Endothelial cell of umbilical vein (primary cell): ENCODE measurements at regions of chr18 and their contacts with region 1.

Region 1: GRCh38 chr18:76803814-76804213 is 18.5 kb upstream of the ZNF236 start:
- DNase-seq: peak; percentile 63
- H3K4me3 ChIP-seq: peak overlapping the region in 1 of 3 experiments; percentile 40
- H3K27ac ChIP-seq: no peak overlapping the region
- H3K4me1 ChIP-seq: peaks cover 9% of the 10 kb centered on the region
- H3K27me3 ChIP-seq: no peaks in the 10 kb centered on the region
- CTCF ChIP-seq: peak; percentile 82 to 85
- POLR2A ChIP-seq: no peak

Region 2: GRCh38 chr18:76791106-76791505 is 12.7 kb before region 1 on chr18:
- CTCF ChIA-PET with region 1: interaction called, 40 read pairs
- POLR2A ChIA-PET with region 1: no interaction called
- dilution Hi-C with region 1: no loop called
- intact Hi-C with region 1: no loop called
- DNase-seq: no peak
- H3K4me3 ChIP-seq: no peak overlapping the region
- H3K27ac ChIP-seq: no peak overlapping the region
- H3K4me1 ChIP-seq: no peaks in the 10 kb centered on the region
- H3K27me3 ChIP-seq: no peaks in the 10 kb centered on the region
- CTCF ChIP-seq: no peak
- POLR2A ChIP-seq: no peak

Region 3: GRCh38 chr18:76847916-76848315 is 44.1 kb after region 1 on chr18:
- CTCF ChIA-PET with region 1: interaction called, 15 read pairs
- POLR2A ChIA-PET with region 1: no interaction called
- dilution Hi-C with region 1: no loop called
- intact Hi-C with region 1: no loop called
- DNase-seq: peak; percentile 17
- H3K4me3 ChIP-seq: no peak overlapping the region
- H3K27ac ChIP-seq: no peak overlapping the region
- H3K4me1 ChIP-seq: no peaks in the 10 kb centered on the region
- H3K27me3 ChIP-seq: no peaks in the 10 kb centered on the region
- CTCF ChIP-seq: no peak
- POLR2A ChIP-seq: no peak

Region 4: GRCh38 chr18:76875390-76876325 is 71.8 kb after region 1 on chr18:
- CTCF ChIA-PET with region 1: interaction called, 19 read pairs
- POLR2A ChIA-PET with region 1: no interaction called
- dilution Hi-C with region 1: no loop called
- intact Hi-C with region 1: loop called (anchors 1 kb)
- DNase-seq: peak; percentile 52
- H3K4me3 ChIP-seq: no peak overlapping the region
- H3K27ac ChIP-seq: no peak overlapping the region
- H3K4me1 ChIP-seq: no peaks in the 10 kb centered on the region
- H3K27me3 ChIP-seq: no peaks in the 10 kb centered on the region
- CTCF ChIP-seq: peak; percentile 63
- POLR2A ChIP-seq: no peak

Region 5: DNA sequence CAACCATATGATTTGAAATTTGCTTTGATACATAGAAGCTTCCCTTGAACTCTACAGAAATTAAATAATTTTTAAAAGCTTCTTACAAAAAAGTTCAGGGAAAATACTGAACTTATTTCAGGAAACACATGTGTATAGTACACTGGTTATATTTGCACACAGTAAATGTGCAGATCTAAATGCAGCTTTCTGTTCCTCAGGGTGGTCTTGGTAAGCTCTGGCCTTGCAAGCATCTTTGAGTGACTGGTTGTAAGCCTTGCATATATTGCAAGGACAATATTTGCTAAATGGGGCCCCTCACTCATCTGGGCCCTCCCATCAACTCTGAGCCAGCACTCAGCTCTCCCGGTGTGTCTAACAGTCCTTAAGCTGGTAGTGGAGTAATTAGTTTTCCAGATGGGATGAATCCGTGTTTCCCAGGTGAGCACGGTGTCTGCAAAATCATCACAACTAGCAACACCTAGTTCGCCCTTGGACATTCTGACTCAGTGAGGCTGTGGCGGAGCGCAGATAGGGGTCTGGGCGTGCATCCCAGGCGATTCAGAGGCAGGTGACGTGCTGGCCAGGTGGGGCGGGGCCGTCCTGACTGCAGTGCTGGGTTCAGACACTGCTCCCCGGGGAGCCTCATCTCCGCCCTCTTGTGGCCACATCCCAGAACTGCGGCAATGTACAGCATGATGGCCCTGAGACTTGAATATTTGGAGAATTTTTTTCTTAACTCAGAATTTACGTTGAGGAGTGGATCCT is 179.2 kb after region 1 on chr18:
- CTCF ChIA-PET with region 1: interaction called, 140 read pairs
- POLR2A ChIA-PET with region 1: interaction called, 3 read pairs
- dilution Hi-C with region 1: no loop called
- intact Hi-C with region 1: loop called (anchors 1 kb)
- DNase-seq: peak; percentile 80
- H3K4me3 ChIP-seq: no peak overlapping the region
- H3K27ac ChIP-seq: no peak overlapping the region
- H3K4me1 ChIP-seq: no peaks in the 10 kb centered on the region
- H3K27me3 ChIP-seq: peaks cover 0 to 7% of the 10 kb centered on the region in 2 experiments
- CTCF ChIP-seq: peak; percentile 89 to 91
- POLR2A ChIP-seq: no peak